CD8-positive, alpha-beta T cell (primary cell): ENCODE measurements at regions of chr11 and their contacts with region 1.

Region 1: GRCh38 chr11:44936525-44936924 is 14.2 kb downstream of the TP53I11 start:
- DNase-seq: peak; percentile 66 to 92 (median 85)
- ATAC-seq: peak; percentile 94
- H3K4me3 ChIP-seq: no peak overlapping the region
- H3K4me3 Mint-ChIP-seq: no peak overlapping the region
- H3K27ac ChIP-seq: no peak overlapping the region
- H3K27ac Mint-ChIP-seq: no peak overlapping the region
- H3K4me1 ChIP-seq: no peaks in the 10 kb centered on the region
- H3K4me1 Mint-ChIP-seq: peaks cover 3% of the 10 kb centered on the region
- H3K27me3 ChIP-seq: no peaks in the 10 kb centered on the region
- H3K27me3 Mint-ChIP-seq: no peaks in the 10 kb centered on the region
- CTCF ChIP-seq: peak; percentile 86

Region 2: DNA sequence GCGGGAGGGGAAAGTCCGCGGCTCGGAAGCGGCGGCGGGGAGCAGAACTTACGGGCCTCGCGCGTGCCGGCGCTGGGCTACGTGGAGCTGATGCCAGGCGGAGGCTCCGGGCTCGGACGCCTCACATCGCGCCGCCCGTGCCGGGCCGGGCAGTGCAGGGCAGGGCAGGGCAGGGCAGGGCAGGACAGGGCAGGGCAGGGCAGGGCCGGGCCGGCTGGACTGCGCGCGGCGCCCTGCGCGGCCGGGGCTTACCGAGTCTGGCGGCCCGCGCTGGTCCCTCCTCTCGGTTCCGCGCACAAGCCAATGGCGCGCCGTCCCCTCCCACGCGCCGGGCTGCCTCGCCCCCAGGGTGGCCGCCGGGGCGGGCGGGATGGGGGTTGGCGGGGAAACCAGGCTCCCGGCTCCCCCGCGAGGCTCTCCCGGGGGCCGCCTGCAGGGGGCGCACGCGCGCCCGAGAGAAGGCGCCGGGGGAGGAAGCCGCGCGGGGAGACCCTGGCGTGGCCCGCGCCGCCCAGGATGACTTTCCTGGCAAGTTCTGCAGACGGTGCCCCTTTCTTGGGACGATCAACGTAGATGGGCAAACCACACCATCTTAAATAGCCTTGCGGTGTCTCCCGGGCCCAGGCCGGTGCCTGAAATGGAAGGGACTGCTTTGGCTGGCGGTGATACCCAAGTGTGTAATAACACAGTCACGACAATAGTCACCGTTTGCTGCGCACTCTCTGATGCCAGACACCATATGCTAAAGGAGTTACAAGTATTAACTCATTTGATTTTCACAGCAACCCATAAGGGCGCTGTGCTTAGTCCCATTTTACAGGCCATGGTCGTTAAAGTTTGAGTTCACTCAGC is 14.3 kb after region 1 on chr11 and contains the start of gene TP53I11:
- CTCF ChIA-PET with region 1: interaction called, 52 read pairs
- POLR2A ChIA-PET with region 1: no interaction called
- intact Hi-C with region 1: no loop called
- DNase-seq: peak; percentile 31 to 82 (median 52)
- ATAC-seq: peak; percentile 79
- H3K4me3 ChIP-seq: peak within 1 kb of the TSS; percentile 56 to 73
- H3K4me3 Mint-ChIP-seq: peak within 1 kb of the TSS; percentile 86
- H3K27ac ChIP-seq: no peak within 1 kb of the TSS
- H3K27ac Mint-ChIP-seq: no peak within 1 kb of the TSS
- H3K4me1 ChIP-seq: no peaks in the 10 kb centered on the region
- H3K4me1 Mint-ChIP-seq: peaks cover 7% of the 10 kb centered on the region
- H3K27me3 ChIP-seq: no peaks in the 10 kb centered on the region
- H3K27me3 Mint-ChIP-seq: no peaks in the 10 kb centered on the region
- CTCF ChIP-seq: peak; percentile 47
- total RNA-seq, gene TP53I11: 4.8 to 6.8 TPM

Region 3: DNA sequence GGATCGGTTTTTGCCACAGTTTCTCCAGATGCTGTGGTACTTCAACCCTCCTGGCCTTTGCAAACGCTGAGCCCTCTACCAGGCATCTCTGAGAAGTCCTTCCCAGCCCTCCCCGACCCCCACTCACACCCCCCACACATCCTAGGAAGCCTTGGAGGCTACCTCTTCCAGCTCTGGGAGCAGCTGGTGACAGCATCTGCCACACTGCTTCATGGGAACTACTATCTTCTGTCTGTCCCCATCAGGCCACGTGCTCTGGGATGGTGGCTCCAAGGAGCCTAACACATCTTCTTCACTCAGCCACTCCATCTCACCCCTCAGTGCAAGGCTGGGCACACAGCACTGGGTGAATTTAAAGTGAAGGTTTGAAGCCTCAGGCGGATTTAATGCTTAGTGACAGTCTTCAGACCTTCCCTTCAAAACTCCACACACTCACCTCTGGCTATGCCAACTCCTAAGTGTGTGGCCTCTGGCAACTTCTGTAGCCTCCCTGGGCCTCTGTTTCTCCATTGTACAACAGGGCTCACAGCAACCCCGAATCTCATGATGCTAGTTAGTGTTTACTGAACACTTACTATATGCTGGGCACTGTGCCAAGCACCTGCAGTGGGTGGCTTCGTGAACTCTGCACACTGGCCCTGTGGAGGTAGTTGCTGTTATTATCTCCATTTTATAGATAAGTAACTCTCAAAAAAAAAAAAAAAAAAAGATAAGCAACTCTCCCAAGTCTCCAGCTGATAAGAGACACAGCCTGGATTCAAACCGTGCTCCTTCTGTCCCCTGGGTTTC is 21.4 kb after region 1 on chr11:
- CTCF ChIA-PET with region 1: interaction called, 12 read pairs
- POLR2A ChIA-PET with region 1: no interaction called
- intact Hi-C with region 1: no loop called
- DNase-seq: no peak
- ATAC-seq: no peak
- H3K4me3 ChIP-seq: no peak overlapping the region
- H3K4me3 Mint-ChIP-seq: no peak overlapping the region
- H3K27ac ChIP-seq: no peak overlapping the region
- H3K27ac Mint-ChIP-seq: no peak overlapping the region
- H3K4me1 ChIP-seq: no peaks in the 10 kb centered on the region
- H3K4me1 Mint-ChIP-seq: no peaks in the 10 kb centered on the region
- H3K27me3 ChIP-seq: no peaks in the 10 kb centered on the region
- H3K27me3 Mint-ChIP-seq: no peaks in the 10 kb centered on the region
- CTCF ChIP-seq: no peak

Region 4: GRCh38 chr11:45158198-45158731 is 221.7 kb after region 1 on chr11:
- CTCF ChIA-PET with region 1: no interaction called
- POLR2A ChIA-PET with region 1: no interaction called
- intact Hi-C with region 1: no loop called
- DNase-seq: no peak
- ATAC-seq: no peak
- H3K4me3 ChIP-seq: no peak overlapping the region
- H3K4me3 Mint-ChIP-seq: no peak overlapping the region
- H3K27ac ChIP-seq: no peak overlapping the region
- H3K27ac Mint-ChIP-seq: no peak overlapping the region
- H3K4me1 ChIP-seq: no peaks in the 10 kb centered on the region
- H3K4me1 Mint-ChIP-seq: peaks cover 42% of the 10 kb centered on the region
- H3K27me3 ChIP-seq: no peaks in the 10 kb centered on the region
- H3K27me3 Mint-ChIP-seq: no peaks in the 10 kb centered on the region
- CTCF ChIP-seq: no peak

Region 5: DNA sequence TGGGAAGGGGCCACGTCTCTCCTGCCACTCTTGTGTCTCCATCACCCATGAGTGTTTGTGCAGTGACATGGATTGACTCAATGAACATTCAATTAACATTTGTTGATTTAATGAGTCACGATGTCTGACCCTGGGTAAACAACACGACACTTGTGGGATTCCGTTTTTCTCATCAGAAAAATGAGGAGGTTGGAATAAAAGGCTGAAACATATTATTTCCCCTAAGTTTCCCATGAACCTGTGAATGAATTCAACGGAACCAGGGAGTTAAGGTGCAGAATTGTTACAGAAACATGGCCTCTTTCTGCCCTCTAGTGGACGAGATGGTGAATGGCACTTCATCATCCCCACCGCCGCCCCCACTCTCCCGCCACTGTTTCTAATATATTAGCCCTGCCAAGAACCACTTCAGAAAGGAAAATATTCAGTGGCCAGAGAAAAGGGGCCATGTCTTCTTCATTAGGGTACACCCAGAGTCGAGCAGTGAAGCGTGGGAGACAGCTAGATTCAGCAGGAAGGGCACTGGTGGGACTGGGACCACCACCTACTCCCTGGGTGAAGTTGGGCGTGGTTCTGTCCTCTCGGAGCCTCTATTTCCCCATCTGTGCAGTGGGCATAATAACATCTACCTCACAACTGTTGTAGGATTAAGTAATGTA is 395.9 kb after region 1 on chr11:
- CTCF ChIA-PET with region 1: interaction called, 10 read pairs
- POLR2A ChIA-PET with region 1: no interaction called
- intact Hi-C with region 1: loop called in 1 of 2 experiments (anchors 2 kb)
- DNase-seq: peak in 6 of 9 experiments; percentile 23 to 63 (median 51)
- ATAC-seq: peak; percentile 51
- H3K4me3 ChIP-seq: no peak overlapping the region
- H3K4me3 Mint-ChIP-seq: no peak overlapping the region
- H3K27ac ChIP-seq: no peak overlapping the region
- H3K27ac Mint-ChIP-seq: no peak overlapping the region
- H3K4me1 ChIP-seq: no peaks in the 10 kb centered on the region
- H3K4me1 Mint-ChIP-seq: no peaks in the 10 kb centered on the region
- H3K27me3 ChIP-seq: no peaks in the 10 kb centered on the region
- H3K27me3 Mint-ChIP-seq: peaks cover 23% of the 10 kb centered on the region
- CTCF ChIP-seq: peak; percentile 93

Region 6: GRCh38 chr11:45339729-45340519 is 403.4 kb after region 1 on chr11:
- CTCF ChIA-PET with region 1: interaction called, 4 read pairs
- POLR2A ChIA-PET with region 1: no interaction called
- intact Hi-C with region 1: loop called in 1 of 2 experiments (anchors 5 kb)
- DNase-seq: peak; percentile 81 to 96 (median 92)
- ATAC-seq: peak; percentile 100
- H3K4me3 ChIP-seq: peak overlapping the region in 1 of 2 experiments; percentile 27
- H3K4me3 Mint-ChIP-seq: peak overlapping the region; percentile 60
- H3K27ac ChIP-seq: no peak overlapping the region
- H3K27ac Mint-ChIP-seq: no peak overlapping the region
- H3K4me1 ChIP-seq: peaks cover 8% of the 10 kb centered on the region
- H3K4me1 Mint-ChIP-seq: peaks cover 10% of the 10 kb centered on the region
- H3K27me3 ChIP-seq: peaks cover 0 to 4% of the 10 kb centered on the region in 2 experiments
- H3K27me3 Mint-ChIP-seq: peaks cover 10% of the 10 kb centered on the region
- CTCF ChIP-seq: peak; percentile 87